CD4-positive, alpha-beta memory T cell (primary cell): ENCODE measurements at regions of chr7 and their contacts with region 1.

Region 1: DNA sequence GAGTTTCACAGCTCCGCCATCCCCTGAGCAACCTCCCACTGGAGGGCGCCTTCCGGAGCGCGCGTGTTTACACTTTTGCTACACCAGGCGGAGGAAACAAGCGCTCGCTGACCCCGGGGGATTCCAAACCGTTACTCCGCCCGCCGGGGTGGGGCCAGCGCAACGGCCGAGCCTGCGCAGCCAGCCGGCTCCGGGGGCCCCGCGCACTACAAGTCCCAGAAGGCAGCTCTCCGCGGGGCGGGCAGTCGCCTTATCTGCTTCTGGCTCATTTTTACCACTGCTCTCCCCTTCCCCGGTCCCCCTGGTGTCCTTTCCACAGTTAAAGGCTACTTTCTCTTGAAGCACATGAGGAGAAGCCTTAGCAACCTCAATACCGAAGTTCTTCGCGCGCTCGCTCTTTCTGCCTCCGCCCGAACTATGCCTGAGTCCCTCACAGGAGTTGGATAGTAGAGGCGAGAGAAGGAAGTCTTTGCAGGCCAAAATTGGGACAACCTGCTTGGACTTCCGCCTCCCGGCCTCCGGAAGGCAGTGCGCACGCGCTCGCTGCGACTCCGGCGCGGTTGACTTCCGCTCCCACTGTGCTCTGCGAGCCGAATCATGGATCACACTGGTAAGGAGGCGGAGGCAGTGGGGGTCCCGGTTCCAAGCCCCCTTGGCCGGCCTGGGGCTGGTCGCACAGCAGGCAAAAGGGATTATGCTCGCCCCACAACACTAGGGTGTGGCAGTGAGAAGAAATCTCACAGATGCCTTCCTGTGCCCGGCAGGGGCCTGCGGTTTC is at the start of gene CBLL1:
- DNase-seq: peak; percentile 96 to 98 (median 97)
- H3K4me3 ChIP-seq: peak within 1 kb of the TSS; percentile 97 to 98
- H3K4me3 Mint-ChIP-seq: peak within 1 kb of the TSS; percentile 90 to 100 (median 97)
- H3K27ac ChIP-seq: peak within 1 kb of the TSS; percentile 99
- H3K27ac Mint-ChIP-seq: peak within 1 kb of the TSS; percentile 99 to 100 (median 100)
- H3K4me1 ChIP-seq: peaks cover 55% of the 10 kb centered on the region
- H3K4me1 Mint-ChIP-seq: peaks cover 27 to 57% (median 41%) of the 10 kb centered on the region in 4 donors
- H3K27me3 ChIP-seq: no peaks in the 10 kb centered on the region
- H3K27me3 Mint-ChIP-seq: no peaks in the 10 kb centered on the region
- total RNA-seq, gene CBLL1: 79.1 to 82.8 TPM

Region 2: DNA sequence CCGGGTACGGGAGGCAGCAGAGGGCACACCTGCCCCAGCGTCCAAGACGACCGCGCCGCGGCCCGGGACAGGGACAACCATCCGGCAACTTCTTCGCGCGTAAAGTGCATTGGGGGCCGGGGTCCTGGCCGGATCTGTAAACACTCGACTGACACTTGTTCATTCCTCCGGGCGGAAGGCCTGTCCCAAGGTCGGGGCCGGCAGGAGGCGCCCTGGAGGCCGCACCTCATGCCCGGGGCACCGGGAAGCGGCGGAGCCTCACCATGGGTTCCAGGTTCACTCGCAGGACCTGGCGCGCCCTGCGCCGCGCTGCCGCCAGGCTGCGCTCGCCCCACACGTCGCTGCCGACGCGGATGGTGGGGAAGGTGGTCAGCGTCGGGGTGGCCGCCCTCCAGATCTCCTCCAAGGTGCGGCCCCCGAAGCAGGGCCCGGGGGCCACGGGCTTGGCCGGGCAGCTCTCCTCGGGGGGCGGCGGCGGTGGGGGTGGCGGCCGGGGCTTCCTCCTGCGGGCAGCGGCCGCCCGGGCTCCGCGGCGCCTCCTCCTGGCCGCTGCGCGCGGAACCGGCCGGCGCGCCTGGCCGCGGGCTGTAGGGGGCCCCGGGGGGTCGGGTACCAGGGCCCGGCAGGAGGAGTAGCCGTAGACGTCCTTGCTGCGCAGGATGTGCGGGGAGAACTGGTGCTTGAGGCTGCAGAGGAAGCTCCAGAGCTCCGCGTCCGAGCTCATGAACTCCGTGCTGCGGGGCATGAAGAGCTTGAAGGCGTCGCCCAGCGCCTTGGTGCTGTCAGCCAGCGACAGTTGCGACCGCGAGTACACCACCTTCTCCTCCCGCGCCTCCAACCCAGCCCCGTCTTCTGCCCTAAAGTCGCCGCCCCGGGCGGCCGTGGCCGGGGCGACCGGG is 1083.5 kb before region 1 on chr7:
- CTCF ChIA-PET with region 1: no interaction called
- POLR2A ChIA-PET with region 1: no interaction called
- intact Hi-C with region 1: loop called (anchors 5 kb)
- DNase-seq: peak; percentile 72 to 79 (median 76)
- H3K4me3 ChIP-seq: peak overlapping the region; percentile 14 to 58
- H3K4me3 Mint-ChIP-seq: peak overlapping the region; percentile 85 to 92 (median 88)
- H3K27ac ChIP-seq: peak overlapping the region; percentile 68
- H3K27ac Mint-ChIP-seq: peak overlapping the region; percentile 87 to 97 (median 93)
- H3K4me1 ChIP-seq: peaks cover 35% of the 10 kb centered on the region
- H3K4me1 Mint-ChIP-seq: peaks cover 17 to 40% (median 29%) of the 10 kb centered on the region in 4 donors
- H3K27me3 ChIP-seq: no peaks in the 10 kb centered on the region
- H3K27me3 Mint-ChIP-seq: no peaks in the 10 kb centered on the region

Region 3: GRCh38 chr7:107563775-107564552 is 179.8 kb before region 1 on chr7 and contains the starts of genes COG5 and DUS4L:
- CTCF ChIA-PET with region 1: interaction called, 5 read pairs
- POLR2A ChIA-PET with region 1: interaction called, 23 read pairs
- intact Hi-C with region 1: loop called (anchors 1 kb)
- DNase-seq: peak; percentile 83 to 86 (median 85)
- H3K4me3 ChIP-seq: peak within 1 kb of the TSS; percentile 76 to 85
- H3K4me3 Mint-ChIP-seq: peak within 1 kb of the TSS; percentile 85 to 95 (median 90)
- H3K27ac ChIP-seq: peak within 1 kb of the TSS; percentile 97
- H3K27ac Mint-ChIP-seq: peak within 1 kb of the TSS; percentile 92 to 99 (median 97)
- H3K4me1 ChIP-seq: peaks cover 56% of the 10 kb centered on the region
- H3K4me1 Mint-ChIP-seq: peaks cover 50 to 66% (median 58%) of the 10 kb centered on the region in 4 donors
- H3K27me3 ChIP-seq: no peaks in the 10 kb centered on the region
- H3K27me3 Mint-ChIP-seq: no peaks in the 10 kb centered on the region
- total RNA-seq, gene COG5: 85.0 to 87.8 TPM
- total RNA-seq, gene DUS4L: 10.9 to 11.3 TPM

Region 4: DNA sequence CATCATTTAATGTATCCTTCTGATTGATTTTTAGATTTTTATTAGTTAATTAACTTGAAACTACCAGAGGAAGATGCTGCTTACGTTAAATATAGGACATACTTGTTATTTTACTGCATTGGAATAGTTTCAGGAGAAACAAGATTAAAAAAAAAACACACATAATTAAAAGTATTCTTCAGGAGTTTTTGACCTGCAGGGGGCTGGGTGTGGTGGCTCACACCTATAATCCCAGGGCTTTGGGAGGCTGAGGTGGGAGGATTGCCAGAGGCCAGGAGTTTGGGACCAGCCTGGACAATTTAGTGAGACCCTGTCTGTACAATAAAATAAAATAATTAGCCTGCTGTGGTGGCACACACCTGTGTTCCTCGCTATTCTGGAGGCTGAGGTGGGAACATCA is 10.9 kb after region 1 on chr7:
- CTCF ChIA-PET with region 1: interaction called, 23 read pairs
- POLR2A ChIA-PET with region 1: interaction called, 31 read pairs
- intact Hi-C with region 1: no loop called
- DNase-seq: no peak
- H3K4me3 ChIP-seq: no peak overlapping the region
- H3K4me3 Mint-ChIP-seq: no peak overlapping the region
- H3K27ac ChIP-seq: no peak overlapping the region
- H3K27ac Mint-ChIP-seq: peak overlapping the region in 6 of 7 donors; percentile 36 to 75 (median 51)
- H3K4me1 ChIP-seq: peaks cover 21% of the 10 kb centered on the region
- H3K4me1 Mint-ChIP-seq: peaks cover 12 to 46% (median 19%) of the 10 kb centered on the region in 4 donors
- H3K27me3 ChIP-seq: no peaks in the 10 kb centered on the region
- H3K27me3 Mint-ChIP-seq: no peaks in the 10 kb centered on the region

Region 5: GRCh38 chr7:107865956-107866775 is 122.4 kb after region 1 on chr7:
- CTCF ChIA-PET with region 1: interaction called, 504 read pairs
- POLR2A ChIA-PET with region 1: interaction called, 408 read pairs
- intact Hi-C with region 1: no loop called
- DNase-seq: no peak
- H3K4me3 ChIP-seq: no peak overlapping the region
- H3K4me3 Mint-ChIP-seq: peak overlapping the region in 6 of 8 donors; percentile 22 to 71 (median 64)
- H3K27ac ChIP-seq: no peak overlapping the region
- H3K27ac Mint-ChIP-seq: peak overlapping the region; percentile 22 to 91 (median 87)
- H3K4me1 ChIP-seq: peaks cover 35% of the 10 kb centered on the region
- H3K4me1 Mint-ChIP-seq: peaks cover 23 to 45% (median 36%) of the 10 kb centered on the region in 4 donors
- H3K27me3 ChIP-seq: no peaks in the 10 kb centered on the region
- H3K27me3 Mint-ChIP-seq: no peaks in the 10 kb centered on the region